Right cardiac atrium (tissue), 5 donors: ENCODE measurements at regions of chr6 and their contacts with region 1.

Region 1: GRCh38 chr6:44475779-44476434 is 88.4 kb downstream of the CDC5L start:
- DNase-seq: peak; percentile 75 to 90 (median 89)
- ATAC-seq: peak; percentile 86 to 91
- H3K4me3 ChIP-seq: no peak overlapping the region
- H3K27ac ChIP-seq: no peak overlapping the region
- H3K4me1 ChIP-seq: no peaks in the 10 kb centered on the region
- H3K27me3 ChIP-seq: no peaks in the 10 kb centered on the region

Region 2: DNA sequence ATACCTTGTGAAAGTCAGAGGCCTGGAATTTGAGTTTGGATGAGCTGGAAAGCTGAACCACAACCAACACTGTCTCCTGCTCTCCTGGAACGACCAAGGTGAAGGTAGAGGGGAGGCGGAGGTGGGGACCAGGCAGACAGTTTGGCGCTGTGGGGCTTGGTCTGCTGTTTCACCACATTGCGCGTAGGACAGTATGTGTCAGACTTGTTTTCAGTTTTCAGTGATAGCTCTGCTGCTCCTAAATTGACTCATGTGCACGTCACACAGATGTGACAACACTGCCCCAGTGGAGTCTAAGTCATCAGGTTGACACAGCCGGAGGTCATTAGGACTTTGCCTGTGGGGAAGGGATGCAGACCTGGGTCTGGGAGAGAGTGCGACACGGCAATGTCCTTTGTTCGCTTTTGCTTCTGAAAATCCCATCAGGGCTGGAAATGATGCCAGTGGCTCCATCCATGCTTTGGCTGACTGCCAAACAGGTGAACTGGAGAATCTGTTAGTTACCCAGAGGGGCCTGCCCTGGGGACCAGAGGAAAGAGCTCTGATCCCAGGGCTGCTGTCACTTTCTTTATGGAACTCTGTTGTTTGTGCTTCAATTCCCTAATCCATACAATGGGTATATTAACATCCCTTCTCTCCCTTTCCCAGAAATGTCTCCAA is 167.1 kb after region 1 on chr6:
- intact Hi-C with region 1: loop called in 3 of 4 experiments (anchors 5 to 10 kb)
- DNase-seq: no peak
- ATAC-seq: no peak
- H3K4me3 ChIP-seq: no peak overlapping the region
- H3K27ac ChIP-seq: no peak overlapping the region
- H3K4me1 ChIP-seq: no peaks in the 10 kb centered on the region
- H3K27me3 ChIP-seq: no peaks in the 10 kb centered on the region

Region 3: DNA sequence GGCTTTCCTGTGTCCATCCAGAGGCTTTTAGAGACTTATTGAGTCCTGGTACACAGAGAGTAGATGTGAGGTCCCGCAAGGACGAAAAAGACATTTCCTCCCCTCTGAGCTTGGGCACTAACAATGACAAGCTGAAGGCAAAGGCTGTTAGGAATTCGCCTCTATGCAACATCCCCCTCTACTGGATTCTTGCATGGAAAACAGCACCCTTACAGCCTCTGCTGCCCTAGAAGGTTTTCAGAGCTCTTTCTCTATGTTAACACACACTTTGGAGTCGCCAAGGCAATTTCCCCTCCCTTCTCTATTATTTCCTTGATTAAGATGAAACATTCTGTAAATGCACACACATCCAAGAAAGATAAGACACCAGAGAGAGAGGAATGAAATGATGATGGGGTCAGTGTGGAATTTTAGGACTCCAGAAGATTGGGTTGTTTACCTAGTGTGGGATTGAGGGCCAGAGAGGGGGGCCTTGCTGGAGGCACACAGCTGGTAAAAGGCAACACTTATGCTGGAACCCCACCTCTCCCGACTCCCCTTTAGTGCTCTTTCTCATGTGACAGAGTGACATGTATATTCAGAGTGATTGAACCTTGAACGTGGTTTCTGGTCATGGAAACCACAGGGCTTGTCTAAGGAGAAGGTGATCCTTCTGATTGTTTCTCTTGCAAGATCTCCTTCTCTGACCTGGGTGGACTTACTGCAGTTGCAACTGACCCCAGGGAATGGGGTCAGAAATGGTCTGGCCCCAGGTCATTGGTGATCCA is 1239.0 kb after region 1 on chr6:
- intact Hi-C with region 1: loop called (anchors 10 kb)
- DNase-seq: no peak
- ATAC-seq: peak; percentile 93 to 94
- H3K4me3 ChIP-seq: no peak overlapping the region
- H3K27ac ChIP-seq: no peak overlapping the region
- H3K4me1 ChIP-seq: no peaks in the 10 kb centered on the region
- H3K27me3 ChIP-seq: no peaks in the 10 kb centered on the region

Region 4: DNA sequence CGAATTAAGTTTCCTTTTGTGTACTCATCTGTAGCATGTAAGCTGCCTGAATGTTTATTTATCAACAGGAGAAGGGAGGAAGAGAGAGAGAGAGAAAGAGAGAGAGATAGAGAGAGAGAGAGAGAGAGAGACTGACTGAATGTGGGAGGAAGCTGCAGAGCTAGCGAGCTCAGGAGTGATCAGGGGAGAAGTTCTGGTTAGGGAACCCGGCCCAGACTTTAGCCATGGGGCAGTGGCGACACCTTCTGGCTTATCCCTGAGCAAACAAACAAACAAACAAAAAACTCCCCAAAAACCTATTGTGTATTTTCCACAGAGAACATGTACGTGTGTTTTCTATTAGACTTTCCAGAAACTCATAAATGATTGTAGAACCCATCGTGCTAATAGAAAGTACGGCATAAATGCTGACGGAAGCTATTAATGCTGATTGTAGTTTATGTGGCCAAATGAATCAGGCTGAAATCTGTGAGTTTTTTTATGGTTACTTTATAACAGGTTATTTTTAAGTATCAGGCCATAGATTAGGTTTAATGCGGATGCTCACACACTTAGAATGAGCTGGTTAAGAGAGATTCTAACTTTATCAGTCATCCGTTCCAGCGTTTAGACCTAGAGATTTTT is 1446.9 kb after region 1 on chr6:
- intact Hi-C with region 1: loop called in 1 of 4 experiments (anchors 5 kb)
- DNase-seq: peak; percentile 63 to 82 (median 75)
- ATAC-seq: peak; percentile 77 to 84
- H3K4me3 ChIP-seq: no peak overlapping the region
- H3K27ac ChIP-seq: no peak overlapping the region
- H3K4me1 ChIP-seq: peaks cover 4% of the 10 kb centered on the region
- H3K27me3 ChIP-seq: no peaks in the 10 kb centered on the region